ENCODE measurements at regions of chr21 and their contacts with region 1.

Region 1: GRCh38 chr21:45104560-45104959 is 30.2 kb downstream of the ADARB1 start:
- DNase-seq: peak; percentile 67
- ATAC-seq: peak; percentile 68
- H3K4me3 Mint-ChIP-seq: peak overlapping the region; percentile 47
- H3K27ac Mint-ChIP-seq: peak overlapping the region; percentile 87
- H3K4me1 Mint-ChIP-seq: peaks cover 63% of the 10 kb centered on the region
- H3K27me3 Mint-ChIP-seq: no peaks in the 10 kb centered on the region

Region 2: GRCh38 chr21:45080639-45081414 is 23.7 kb before region 1 on chr21:
- CTCF ChIA-PET with region 1: interaction called, 6 read pairs
- POLR2A ChIA-PET with region 1: interaction called, 3 read pairs
- intact Hi-C with region 1: loop called (anchors 1 to 2 kb)
- DNase-seq: peak; percentile 64
- ATAC-seq: peak; percentile 42
- H3K4me3 Mint-ChIP-seq: peak overlapping the region; percentile 22
- H3K27ac Mint-ChIP-seq: peak overlapping the region; percentile 92
- H3K4me1 Mint-ChIP-seq: peaks cover 100% of the 10 kb centered on the region
- H3K27me3 Mint-ChIP-seq: no peaks in the 10 kb centered on the region

Measured in activated CD4-positive, alpha-beta T cell treated with anti-CD3 and anti-CD28 coated beads for 36 hours (primary cell).